HEK293 (cell line): ENCODE measurements at regions of chr14 and their contacts with region 1.

Region 1: DNA sequence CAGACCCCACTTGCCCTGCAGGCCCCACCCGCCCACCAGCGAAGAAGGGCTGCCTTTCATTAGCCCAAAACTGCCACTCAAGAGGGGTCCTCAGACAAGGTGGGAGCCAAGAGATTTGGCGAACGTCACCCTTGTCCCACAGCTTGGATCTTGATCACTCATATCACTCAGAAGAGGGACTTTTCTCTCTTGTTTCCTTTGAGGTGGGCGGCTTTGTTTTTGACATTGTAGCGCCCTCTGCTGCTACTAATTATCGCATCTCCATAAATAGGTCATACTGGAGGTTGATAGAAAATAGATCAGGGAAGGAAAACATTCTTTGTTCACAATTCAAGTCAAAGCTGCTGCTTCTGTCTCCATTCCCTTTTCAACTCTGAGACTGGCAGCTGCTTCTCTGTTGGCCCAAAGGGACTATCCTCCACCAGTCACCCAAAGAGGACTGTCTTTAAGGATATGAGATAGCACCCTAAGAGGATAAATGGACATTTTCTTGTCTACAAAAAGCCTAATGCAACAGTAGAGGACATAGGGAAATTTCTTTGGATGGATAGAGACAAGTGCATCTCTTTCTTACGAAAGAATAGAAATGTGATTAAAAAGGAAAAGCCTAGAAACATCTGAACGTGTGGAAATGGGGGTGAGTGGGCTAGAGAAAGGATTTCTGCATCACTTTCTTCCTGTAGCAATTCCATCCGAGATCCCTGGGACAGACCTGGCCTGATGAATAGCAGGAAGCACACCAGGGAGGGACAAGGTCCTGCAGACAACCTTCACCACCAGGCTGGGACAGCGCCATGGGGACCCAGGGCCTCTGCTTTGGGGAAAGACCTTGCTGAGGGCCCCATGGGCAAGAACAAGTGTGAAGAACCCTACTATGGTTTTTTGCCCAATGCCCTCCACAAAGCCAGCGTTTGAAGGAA is 115.8 kb downstream of the DAD1 start:
- H3K4me3 ChIP-seq: no peak overlapping the region
- H3K27ac ChIP-seq: no peak overlapping the region
- H3K4me1 ChIP-seq: no peaks in the 10 kb centered on the region; the same call in 1 of the 2 replicates
- CTCF ChIP-seq: peak; percentile 63; the same call in 1 of the 2 replicates

Region 2: GRCh38 chr14:21617614-21618013 is 855.6 kb before region 1 on chr14:
- CTCF ChIA-PET with region 1: no interaction called
- POLR2A ChIA-PET with region 1: no interaction called
- H3K4me3 ChIP-seq: no peak overlapping the region
- H3K27ac ChIP-seq: no peak overlapping the region
- H3K4me1 ChIP-seq: no peaks in the 10 kb centered on the region
- CTCF ChIP-seq: no peak

Region 3: GRCh38 chr14:22319526-22320361 is 153.5 kb before region 1 on chr14:
- CTCF ChIA-PET with region 1: interaction called, 57 read pairs
- POLR2A ChIA-PET with region 1: no interaction called
- H3K4me3 ChIP-seq: no peak overlapping the region
- H3K27ac ChIP-seq: no peak overlapping the region
- H3K4me1 ChIP-seq: no peaks in the 10 kb centered on the region
- CTCF ChIP-seq: peak; percentile 31; the same call in 1 of the 2 replicates

Region 4: DNA sequence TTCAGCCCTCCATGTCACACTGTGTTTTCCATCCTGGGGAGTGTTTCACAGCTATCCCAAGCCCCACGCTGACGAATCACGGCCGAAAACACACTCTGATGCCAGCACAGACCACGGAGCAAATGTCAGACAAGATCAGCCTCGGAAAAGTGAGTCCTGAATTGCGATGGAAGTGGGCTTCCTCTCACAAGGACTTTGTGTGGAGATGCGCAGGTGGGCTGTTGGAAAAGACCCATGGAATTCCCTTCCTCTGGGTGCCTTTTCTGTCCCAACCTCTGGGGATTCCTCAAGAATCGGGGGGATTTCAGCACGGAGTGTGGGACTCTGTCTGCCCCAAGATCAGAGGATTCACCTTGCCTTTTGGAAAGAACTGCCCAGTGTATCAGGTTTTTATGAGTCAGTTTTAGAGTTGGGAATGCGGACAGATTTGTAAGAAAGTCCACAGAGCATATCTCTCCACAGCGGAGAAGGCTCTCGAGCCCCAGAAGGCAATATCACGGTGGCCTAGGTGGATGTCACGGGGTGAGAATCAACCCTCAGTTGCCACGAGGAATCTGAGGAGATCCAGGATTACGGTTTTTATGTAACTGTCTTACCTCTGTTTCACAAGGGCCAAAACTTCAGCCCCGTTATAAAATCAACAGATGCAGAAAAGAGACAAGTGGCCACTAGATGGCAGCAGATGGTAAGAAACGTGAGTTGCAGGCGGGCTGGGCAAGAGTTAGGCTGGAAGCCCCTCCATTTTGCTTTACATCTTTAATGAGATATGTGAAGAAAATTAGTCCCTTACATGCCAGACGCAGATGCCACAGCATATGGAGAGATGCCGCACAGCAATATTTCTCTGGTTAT is 86.0 kb before region 1 on chr14:
- CTCF ChIA-PET with region 1: interaction called, 209 read pairs
- POLR2A ChIA-PET with region 1: no interaction called
- H3K4me3 ChIP-seq: no peak overlapping the region
- H3K27ac ChIP-seq: no peak overlapping the region
- H3K4me1 ChIP-seq: no peaks in the 10 kb centered on the region
- CTCF ChIP-seq: peak; percentile 69

Region 5: DNA sequence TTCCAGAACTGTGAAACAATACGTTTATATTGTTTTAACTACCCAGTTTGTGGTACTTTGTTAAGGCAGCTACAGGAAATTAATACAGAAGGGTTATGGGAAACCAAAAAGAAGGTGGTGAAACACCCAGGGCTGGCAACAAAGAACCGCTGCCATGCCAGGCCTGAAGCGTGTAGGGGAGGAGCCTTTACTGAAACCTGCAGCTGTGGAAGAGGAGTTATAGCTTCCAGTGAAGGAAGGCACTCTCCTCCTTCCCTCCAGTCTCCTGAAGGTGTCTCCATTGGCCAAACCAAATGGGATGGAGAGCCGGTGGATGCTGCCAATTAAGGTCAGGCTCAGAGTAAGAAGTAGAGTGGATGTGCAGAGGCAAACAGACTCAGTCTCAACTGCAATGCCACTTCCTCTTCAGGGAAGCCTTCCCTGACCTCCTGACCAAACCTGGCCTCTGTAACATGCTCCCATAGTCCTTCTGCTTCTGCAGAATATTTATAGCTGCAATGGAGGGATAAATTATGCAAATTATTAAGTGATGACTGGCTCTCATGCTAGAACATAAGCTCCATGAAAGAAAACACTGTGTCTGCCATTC is 52.5 kb before region 1 on chr14:
- CTCF ChIA-PET with region 1: interaction called, 13 read pairs
- POLR2A ChIA-PET with region 1: no interaction called
- H3K4me3 ChIP-seq: no peak overlapping the region
- H3K27ac ChIP-seq: no peak overlapping the region
- H3K4me1 ChIP-seq: no peaks in the 10 kb centered on the region
- CTCF ChIP-seq: no peak

Region 6: DNA sequence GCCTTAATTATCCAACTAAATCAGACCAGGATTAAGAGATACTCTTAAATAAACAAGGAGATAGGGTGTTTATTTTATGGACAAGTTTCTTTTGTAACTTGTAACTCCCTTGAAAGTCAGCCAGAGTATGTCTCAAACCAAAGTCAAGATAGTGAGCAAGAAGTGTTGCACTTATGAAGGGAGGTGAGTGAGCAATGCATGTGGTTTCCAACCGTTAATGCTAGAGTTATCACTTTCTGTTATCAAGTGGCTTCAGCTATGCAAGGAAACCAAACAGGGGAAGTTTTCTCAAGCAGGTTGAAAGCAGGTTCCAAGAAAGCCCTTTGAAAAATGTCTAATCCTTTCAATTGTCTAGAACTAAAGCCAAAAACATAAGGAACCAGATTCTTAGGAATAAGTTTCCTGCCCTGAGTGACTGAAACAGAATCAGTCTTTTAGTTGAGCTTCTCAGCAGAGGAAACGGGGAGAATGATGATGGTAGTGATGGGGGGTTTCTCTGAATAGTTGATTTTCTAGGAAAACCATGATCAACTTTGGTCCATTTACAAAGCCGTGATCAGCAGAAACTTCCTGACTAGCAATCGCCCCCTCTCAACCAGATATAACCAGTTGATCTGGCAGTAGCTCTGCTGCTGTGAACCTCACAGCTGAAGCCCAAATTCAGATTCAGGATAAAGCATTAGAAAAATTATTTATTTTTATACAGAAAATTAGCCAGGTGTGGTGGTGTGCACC is 12.6 kb before region 1 on chr14:
- CTCF ChIA-PET with region 1: interaction called, 31 read pairs
- POLR2A ChIA-PET with region 1: no interaction called
- H3K4me3 ChIP-seq: no peak overlapping the region
- H3K27ac ChIP-seq: no peak overlapping the region
- H3K4me1 ChIP-seq: 0 out of 2 replicates have a peak, but pooled peaks cover 2% of the 10 kb centered on the region
- CTCF ChIP-seq: no peak